AG04450 (cell line): ENCODE measurements at regions of chr2 and their contacts with region 1.

Region 1: GRCh38 chr2:171687287-171688128 is at the start of gene DYNC1I2:
- DNase-seq: peak; percentile 88
- H3K4me3 ChIP-seq: peak within 1 kb of the TSS; percentile 88
- H3K27ac ChIP-seq: peak within 1 kb of the TSS; percentile 87
- H3K27me3 ChIP-seq: peaks cover 2% of the 10 kb centered on the region
- CTCF ChIP-seq: no peak
- polyA plus RNA-seq, gene DYNC1I2: 176 and 228 TPM in 2 replicates

Region 2: DNA sequence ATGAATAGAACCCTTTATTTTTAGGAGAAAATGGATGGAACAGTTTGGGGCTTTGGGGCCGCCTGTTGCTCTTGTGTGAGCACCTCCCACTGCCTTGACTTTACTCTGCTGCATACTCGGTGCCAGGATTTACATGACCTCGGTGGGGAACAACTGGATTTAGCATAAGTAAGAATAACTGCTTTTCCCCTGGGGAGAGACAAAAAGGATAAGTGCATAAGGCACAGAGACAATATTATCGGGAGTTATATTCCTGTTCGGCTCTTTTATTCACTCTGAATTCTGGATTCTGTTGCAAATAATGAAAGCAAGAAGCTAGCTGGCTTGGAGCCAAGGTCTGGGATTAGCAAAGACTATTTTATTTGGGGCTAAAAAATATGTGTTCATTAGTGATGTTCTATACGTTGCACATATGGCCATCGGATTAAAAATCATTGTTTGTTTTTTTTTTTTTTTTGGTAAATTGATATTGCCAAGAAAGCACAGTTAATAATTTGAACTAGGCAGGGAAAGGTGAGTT is 95.4 kb before region 1 on chr2:
- CTCF ChIA-PET with region 1: no interaction called
- POLR2A ChIA-PET with region 1: interaction called, 11 read pairs
- DNase-seq: no peak
- H3K4me3 ChIP-seq: no peak overlapping the region
- H3K27ac ChIP-seq: no peak overlapping the region
- H3K27me3 ChIP-seq: no peaks in the 10 kb centered on the region
- CTCF ChIP-seq: no peak

Region 3: DNA sequence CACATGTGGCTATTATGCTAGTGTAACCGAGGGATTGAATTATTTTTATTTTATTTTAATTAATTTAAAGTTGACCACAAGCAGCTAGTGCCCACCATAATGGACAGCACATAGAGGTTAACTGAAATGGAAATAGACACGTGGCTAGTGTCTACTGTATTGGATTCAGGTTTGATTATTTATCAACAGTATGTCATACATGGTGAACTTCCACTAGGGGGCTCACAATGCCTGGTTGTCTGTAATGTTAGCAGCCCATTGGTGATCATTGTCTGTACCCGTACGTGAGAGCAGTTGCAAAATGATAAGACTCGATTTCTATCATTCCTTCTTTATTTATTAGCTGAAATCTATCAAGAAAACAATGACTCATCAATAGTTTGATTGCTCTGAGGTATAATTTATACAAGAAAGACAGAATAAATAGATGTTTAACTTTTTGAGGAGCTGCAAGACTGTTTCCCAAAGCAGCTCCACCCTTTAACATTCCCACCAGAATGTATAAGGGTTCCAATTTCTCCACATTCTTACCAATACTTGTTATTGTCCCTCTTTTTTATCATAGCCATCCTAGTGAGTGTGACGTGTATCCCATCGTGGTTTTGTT is 88.7 kb before region 1 on chr2:
- CTCF ChIA-PET with region 1: interaction called, 13 read pairs
- POLR2A ChIA-PET with region 1: no interaction called
- DNase-seq: peak; percentile 34
- H3K4me3 ChIP-seq: no peak overlapping the region
- H3K27ac ChIP-seq: no peak overlapping the region
- H3K27me3 ChIP-seq: peaks cover 2% of the 10 kb centered on the region
- CTCF ChIP-seq: peak; percentile 89

Region 4: GRCh38 chr2:171655586-171655985 is 31.9 kb before region 1 on chr2:
- CTCF ChIA-PET with region 1: no interaction called
- POLR2A ChIA-PET with region 1: no interaction called
- DNase-seq: no peak
- H3K4me3 ChIP-seq: no peak overlapping the region
- H3K27ac ChIP-seq: no peak overlapping the region
- H3K27me3 ChIP-seq: peaks cover 12% of the 10 kb centered on the region
- CTCF ChIP-seq: no peak

Region 5: DNA sequence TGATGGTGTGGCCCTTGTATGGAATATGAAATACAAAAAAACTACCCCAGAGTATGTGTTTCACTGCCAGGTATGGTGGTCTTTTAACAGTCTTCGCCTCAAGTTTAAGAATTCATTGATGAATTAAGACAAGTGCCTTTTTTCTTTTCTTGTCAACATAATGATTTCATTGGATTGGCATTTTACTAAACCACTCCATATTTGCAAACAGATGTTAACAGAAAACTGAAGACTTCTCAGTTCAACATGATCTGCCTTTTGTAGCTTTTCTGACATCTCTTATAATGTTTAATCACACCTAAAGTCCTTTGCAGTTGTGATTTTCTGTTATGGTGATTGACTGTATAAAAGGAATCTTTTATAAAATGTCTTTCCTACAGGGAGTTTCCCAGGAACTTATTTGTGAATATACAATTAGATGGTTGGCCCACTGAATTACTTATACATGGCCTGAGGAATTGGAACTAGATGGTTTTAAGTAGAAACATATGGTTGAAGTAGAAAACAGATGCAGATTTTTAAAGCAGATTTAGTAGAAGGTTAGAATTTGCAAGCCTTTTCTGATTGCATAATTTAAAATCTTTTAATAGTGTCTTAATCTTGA is 39.4 kb after region 1 on chr2:
- CTCF ChIA-PET with region 1: no interaction called
- POLR2A ChIA-PET with region 1: no interaction called
- DNase-seq: no peak
- H3K4me3 ChIP-seq: no peak overlapping the region
- H3K27ac ChIP-seq: no peak overlapping the region
- H3K27me3 ChIP-seq: no peaks in the 10 kb centered on the region
- CTCF ChIP-seq: no peak